Vagina (tissue), 2 donors: ENCODE measurements at regions of chr2 and their contacts with region 1.

Region 1: GRCh38 chr2:102240640-102241370 is 54.0 kb downstream of the IL1RL2 start:
- DNase-seq: no peak
- H3K4me3 ChIP-seq: no peak overlapping the region
- H3K27ac ChIP-seq: peak overlapping the region; percentile 70
- H3K4me1 ChIP-seq: no peaks in the 10 kb centered on the region
- H3K27me3 ChIP-seq: no peaks in the 10 kb centered on the region
- CTCF ChIP-seq: peak; percentile 88 to 97 (median 91)
- POLR2A ChIP-seq: no peak

Region 2: GRCh38 chr2:101883863-101884262 is 356.9 kb before region 1 on chr2:
- intact Hi-C with region 1: loop called (anchors 10 kb)
- DNase-seq: no peak
- H3K4me3 ChIP-seq: no peak overlapping the region
- H3K27ac ChIP-seq: no peak overlapping the region
- H3K4me1 ChIP-seq: peaks cover 40% of the 10 kb centered on the region
- H3K27me3 ChIP-seq: no peaks in the 10 kb centered on the region
- CTCF ChIP-seq: peak in 2 of 3 experiments; percentile 5 to 42
- POLR2A ChIP-seq: no peak

Region 3: GRCh38 chr2:101921319-101921952 is 319.4 kb before region 1 on chr2:
- intact Hi-C with region 1: no loop called
- DNase-seq: no peak
- H3K4me3 ChIP-seq: no peak overlapping the region
- H3K27ac ChIP-seq: no peak overlapping the region
- H3K4me1 ChIP-seq: no peaks in the 10 kb centered on the region
- H3K27me3 ChIP-seq: no peaks in the 10 kb centered on the region
- CTCF ChIP-seq: no peak
- POLR2A ChIP-seq: no peak